Ovary (tissue), 10 donors: ENCODE measurements at regions of chr4 and their contacts with region 1.

Region 1: DNA sequence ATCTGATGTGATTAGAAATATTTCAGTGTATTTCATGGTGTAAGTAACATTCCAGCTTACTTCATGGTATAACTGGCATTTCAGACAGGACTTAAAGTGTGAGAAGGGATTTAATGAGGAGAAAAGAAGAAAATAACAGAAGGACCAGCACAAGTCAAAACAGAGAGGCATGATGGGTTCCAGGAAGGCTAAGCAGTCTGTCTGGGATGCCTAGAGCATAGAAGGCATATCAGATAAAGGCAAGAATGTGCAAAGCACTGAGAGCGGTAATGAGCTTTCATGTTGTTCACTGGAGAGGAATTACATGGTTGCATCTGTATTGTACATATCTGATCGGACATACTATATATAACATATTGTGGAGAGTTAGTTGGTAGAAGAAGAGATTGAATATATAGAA is 54.2 kb downstream of the GRID2 start:
- DNase-seq: no peak
- H3K4me3 ChIP-seq: no peak overlapping the region
- H3K27ac ChIP-seq: no peak overlapping the region
- H3K4me1 ChIP-seq: no peaks in the 10 kb centered on the region
- H3K27me3 ChIP-seq: no peaks in the 10 kb centered on the region
- CTCF ChIP-seq: no peak
- EP300 ChIP-seq: no peak
- POLR2A ChIP-seq: no peak

Region 2: DNA sequence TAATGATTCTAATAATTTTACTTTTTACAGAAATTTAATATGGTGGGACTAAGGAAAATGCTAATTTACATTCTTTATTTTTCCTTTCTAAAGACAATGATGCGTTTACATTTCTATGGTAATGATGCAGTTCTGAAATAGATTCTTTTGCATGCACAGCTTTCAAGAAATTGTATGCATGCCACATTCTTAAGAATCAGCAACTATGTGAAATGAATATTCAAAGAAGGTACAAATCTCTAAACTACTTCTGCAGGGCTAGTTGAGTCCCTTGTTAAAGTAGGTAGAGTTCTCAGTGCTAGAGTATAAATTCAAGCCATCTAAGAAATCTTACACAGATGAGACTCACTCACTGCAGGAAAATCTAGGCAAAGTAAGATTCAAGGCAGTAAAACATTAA is 78.7 kb before region 1 on chr4:
- intact Hi-C with region 1: no loop called
- DNase-seq: no peak
- H3K4me3 ChIP-seq: no peak overlapping the region
- H3K27ac ChIP-seq: no peak overlapping the region
- H3K4me1 ChIP-seq: no peaks in the 10 kb centered on the region
- H3K27me3 ChIP-seq: no peaks in the 10 kb centered on the region
- CTCF ChIP-seq: no peak
- EP300 ChIP-seq: no peak
- POLR2A ChIP-seq: no peak

Region 3: DNA sequence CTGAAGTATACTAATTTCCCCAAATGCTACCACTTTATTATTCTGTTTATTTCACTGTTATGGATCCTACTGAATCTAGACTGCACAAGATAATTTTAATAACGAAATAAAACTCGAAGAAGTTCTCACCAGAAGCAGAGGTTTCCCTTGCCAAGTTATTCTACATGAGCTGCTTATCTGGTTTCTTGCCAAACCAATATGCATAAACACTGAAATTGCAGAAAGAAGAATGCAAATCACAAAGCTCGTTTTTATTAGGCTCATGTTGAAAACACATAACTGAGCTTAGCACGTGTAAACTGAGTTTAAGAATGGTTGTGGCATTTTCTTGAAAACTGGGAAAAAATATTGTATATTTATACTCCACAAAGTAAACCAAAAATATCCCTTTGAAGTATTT is 18.3 kb before region 1 on chr4:
- intact Hi-C with region 1: loop called in 1 of 4 experiments (anchors 2 kb)
- DNase-seq: no peak
- H3K4me3 ChIP-seq: no peak overlapping the region
- H3K27ac ChIP-seq: no peak overlapping the region
- H3K4me1 ChIP-seq: peaks cover under 1% of the 10 kb centered on the region
- H3K27me3 ChIP-seq: no peaks in the 10 kb centered on the region
- CTCF ChIP-seq: no peak
- EP300 ChIP-seq: no peak
- POLR2A ChIP-seq: no peak